ENCODE measurements at regions of chr3 and their contacts with region 1.

Region 1: GRCh38 chr3:120039642-120040610 is 54.3 kb downstream of the GSK3B start:
- DNase-seq: peak in 2 of 9 experiments; percentile 11 to 34
- ATAC-seq: no peak
- H3K4me3 ChIP-seq: no peak overlapping the region
- H3K4me3 Mint-ChIP-seq: no peak overlapping the region
- H3K27ac ChIP-seq: no peak overlapping the region
- H3K27ac Mint-ChIP-seq: no peak overlapping the region
- H3K4me1 ChIP-seq: peaks cover 4% of the 10 kb centered on the region
- H3K4me1 Mint-ChIP-seq: peaks cover 40% of the 10 kb centered on the region
- H3K27me3 ChIP-seq: no peaks in the 10 kb centered on the region
- H3K27me3 Mint-ChIP-seq: no peaks in the 10 kb centered on the region
- CTCF ChIP-seq: no peak

Region 2: DNA sequence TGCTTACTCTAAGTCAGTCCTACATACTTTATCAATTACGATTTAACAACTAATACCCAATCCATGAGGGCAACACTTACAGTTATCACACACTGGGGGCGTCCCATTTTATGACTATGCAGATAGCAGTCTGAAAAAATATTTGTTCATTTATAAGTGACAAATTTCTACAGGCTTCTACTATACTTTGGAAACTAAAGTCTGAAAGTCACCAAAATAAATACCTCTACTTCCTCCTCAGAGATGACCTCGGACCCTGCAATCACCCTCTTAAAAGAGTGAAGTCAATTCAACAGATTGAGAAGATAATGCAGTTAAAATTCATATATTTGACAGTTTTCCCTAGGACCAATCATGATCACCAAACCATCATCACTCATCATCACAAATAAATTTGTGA is 22.2 kb before region 1 on chr3:
- CTCF ChIA-PET with region 1: no interaction called
- POLR2A ChIA-PET with region 1: no interaction called
- intact Hi-C with region 1: loop called in 1 of 2 experiments (anchors 2 kb)
- DNase-seq: no peak
- ATAC-seq: no peak
- H3K4me3 ChIP-seq: no peak overlapping the region
- H3K4me3 Mint-ChIP-seq: no peak overlapping the region
- H3K27ac ChIP-seq: no peak overlapping the region
- H3K27ac Mint-ChIP-seq: peak overlapping the region; percentile 16
- H3K4me1 ChIP-seq: peaks cover 33% of the 10 kb centered on the region
- H3K4me1 Mint-ChIP-seq: peaks cover 77% of the 10 kb centered on the region
- H3K27me3 ChIP-seq: no peaks in the 10 kb centered on the region
- H3K27me3 Mint-ChIP-seq: no peaks in the 10 kb centered on the region
- CTCF ChIP-seq: no peak